ENCODE measurements at regions of chr4 and their contacts with region 1.

Region 1: GRCh38 chr4:140359562-140360427 is 13.7 kb upstream of the SCOC start:
- DNase-seq: peak; percentile 47 to 88
- H3K4me3 ChIP-seq: no peak overlapping the region
- H3K27ac ChIP-seq: no peak overlapping the region
- H3K4me1 ChIP-seq: no peaks in the 10 kb centered on the region
- H3K27me3 ChIP-seq: peaks cover 0 to 2% (median 0%) of the 10 kb centered on the region in 4 experiments; a peak in 1 of 7 replicates
- CTCF ChIP-seq: peak; percentile 66 to 91 (median 83)
- EP300 ChIP-seq: no peak
- POLR2A ChIP-seq: no peak
- RAD21 ChIP-seq: peak; percentile 63 to 68

Region 2: DNA sequence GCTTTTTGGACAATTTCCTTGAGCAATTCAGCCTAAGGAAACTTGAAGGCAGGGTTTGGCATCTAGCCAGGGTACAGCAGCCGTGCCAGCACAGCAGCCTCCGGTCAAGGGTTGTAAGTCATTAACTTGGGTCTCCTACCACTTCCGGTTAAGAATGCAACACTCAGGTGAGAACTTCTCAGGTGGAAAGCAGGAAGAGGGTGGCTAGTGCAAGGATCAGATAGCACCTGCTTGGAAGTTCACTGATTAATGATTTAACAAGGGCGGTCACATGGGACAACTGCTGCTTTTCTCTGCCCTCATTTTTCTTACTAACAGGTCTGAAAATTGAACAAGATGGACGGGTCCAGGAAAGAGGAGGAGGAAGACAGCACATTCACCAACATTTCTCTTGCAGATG is 16.5 kb before region 1 on chr4:
- CTCF ChIA-PET with region 1: interaction called, 44 read pairs
- POLR2A ChIA-PET with region 1: no interaction called
- DNase-seq: no peak
- H3K4me3 ChIP-seq: no peak overlapping the region
- H3K27ac ChIP-seq: no peak overlapping the region
- H3K4me1 ChIP-seq: peaks cover 0 to 12% (median 6%) of the 10 kb centered on the region in 4 experiments; a peak in 5 of 7 replicates
- H3K27me3 ChIP-seq: peaks cover 0 to 1% (median 0%) of the 10 kb centered on the region in 4 experiments; a peak in 2 of 7 replicates
- CTCF ChIP-seq: no peak
- EP300 ChIP-seq: no peak
- POLR2A ChIP-seq: no peak
- RAD21 ChIP-seq: no peak

Region 3: GRCh38 chr4:140382732-140383131 is 22.9 kb after region 1 on chr4:
- CTCF ChIA-PET with region 1: interaction called, 17 read pairs
- POLR2A ChIA-PET with region 1: no interaction called
- DNase-seq: no peak
- H3K4me3 ChIP-seq: no peak overlapping the region
- H3K27ac ChIP-seq: no peak overlapping the region
- H3K4me1 ChIP-seq: no peaks in the 10 kb centered on the region
- H3K27me3 ChIP-seq: no peaks in the 10 kb centered on the region
- CTCF ChIP-seq: no peak
- EP300 ChIP-seq: no peak
- POLR2A ChIP-seq: no peak
- RAD21 ChIP-seq: no peak

Region 4: GRCh38 chr4:140568507-140569306 is 208.9 kb after region 1 on chr4 and contains the start of gene UCP1:
- CTCF ChIA-PET with region 1: interaction called, 11 read pairs
- POLR2A ChIA-PET with region 1: no interaction called
- DNase-seq: peak in 1 of 2 experiments; percentile 74
- H3K4me3 ChIP-seq: peak within 1 kb of the TSS; percentile 45 to 64 (median 56)
- H3K27ac ChIP-seq: no peak within 1 kb of the TSS
- H3K4me1 ChIP-seq: peaks cover 0 to 8% (median 3%) of the 10 kb centered on the region in 4 experiments; a peak in 3 of 7 replicates
- H3K27me3 ChIP-seq: peaks cover 29 to 50% (median 41%) of the 10 kb centered on the region in 4 experiments
- CTCF ChIP-seq: peak in 1 of 3 experiments; percentile 20; a peak in 1 of 4 replicates
- EP300 ChIP-seq: no peak
- POLR2A ChIP-seq: peak in 1 of 2 experiments; percentile 68; a peak in 2 of 3 replicates
- RAD21 ChIP-seq: no peak
- total RNA-seq, gene UCP1: 0.20 and 0.29 TPM in 2 replicates

Region 5: DNA sequence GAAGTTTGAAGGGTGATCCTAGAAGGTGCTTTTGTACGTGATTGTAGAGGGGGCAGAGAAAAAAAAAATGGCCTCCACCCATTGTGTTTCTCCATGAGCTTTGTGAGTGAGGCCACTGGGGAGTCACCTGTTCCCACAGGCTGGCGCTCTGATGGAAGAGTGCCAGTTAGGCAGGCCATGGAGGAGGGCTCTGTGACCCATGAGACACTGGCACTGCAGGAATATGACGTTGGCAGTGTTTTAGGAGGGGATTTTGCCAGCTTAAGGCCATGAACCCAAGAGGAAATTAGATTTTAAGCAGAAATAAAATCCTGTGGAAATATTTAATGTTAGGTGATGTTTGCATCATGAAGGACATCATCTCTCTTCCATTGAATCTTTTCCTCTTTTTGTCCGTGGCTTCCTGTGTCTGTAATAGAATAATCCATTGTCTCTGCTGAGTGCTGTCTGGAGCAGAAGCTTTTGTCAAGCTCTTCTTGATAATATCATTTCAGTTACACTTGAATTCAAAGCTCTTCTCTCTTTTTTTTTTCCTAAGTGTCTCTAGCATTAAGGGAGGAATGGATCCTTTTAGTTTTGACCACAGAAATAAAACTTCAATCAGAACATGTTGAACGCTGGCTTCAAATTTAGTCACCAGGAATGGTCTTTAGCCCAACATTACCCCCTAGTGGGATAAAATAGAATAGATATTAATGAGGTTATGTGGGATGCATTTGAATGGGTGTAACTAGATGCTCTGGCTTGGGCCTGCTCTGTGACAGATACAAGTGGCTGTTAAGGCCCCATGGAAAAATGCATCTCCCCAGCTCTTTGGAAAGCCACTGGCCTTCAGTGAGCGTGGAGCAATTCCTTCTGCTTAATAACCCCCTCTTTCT is 250.0 kb after region 1 on chr4:
- CTCF ChIA-PET with region 1: interaction called, 10 read pairs
- POLR2A ChIA-PET with region 1: no interaction called
- DNase-seq: no peak
- H3K4me3 ChIP-seq: no peak overlapping the region
- H3K27ac ChIP-seq: no peak overlapping the region
- H3K4me1 ChIP-seq: no peaks in the 10 kb centered on the region
- H3K27me3 ChIP-seq: no peaks in the 10 kb centered on the region
- CTCF ChIP-seq: peak in 1 of 3 experiments; percentile 18; a peak in 1 of 4 replicates
- EP300 ChIP-seq: no peak
- POLR2A ChIP-seq: no peak
- RAD21 ChIP-seq: peak; percentile 47 to 48

Region 6: DNA sequence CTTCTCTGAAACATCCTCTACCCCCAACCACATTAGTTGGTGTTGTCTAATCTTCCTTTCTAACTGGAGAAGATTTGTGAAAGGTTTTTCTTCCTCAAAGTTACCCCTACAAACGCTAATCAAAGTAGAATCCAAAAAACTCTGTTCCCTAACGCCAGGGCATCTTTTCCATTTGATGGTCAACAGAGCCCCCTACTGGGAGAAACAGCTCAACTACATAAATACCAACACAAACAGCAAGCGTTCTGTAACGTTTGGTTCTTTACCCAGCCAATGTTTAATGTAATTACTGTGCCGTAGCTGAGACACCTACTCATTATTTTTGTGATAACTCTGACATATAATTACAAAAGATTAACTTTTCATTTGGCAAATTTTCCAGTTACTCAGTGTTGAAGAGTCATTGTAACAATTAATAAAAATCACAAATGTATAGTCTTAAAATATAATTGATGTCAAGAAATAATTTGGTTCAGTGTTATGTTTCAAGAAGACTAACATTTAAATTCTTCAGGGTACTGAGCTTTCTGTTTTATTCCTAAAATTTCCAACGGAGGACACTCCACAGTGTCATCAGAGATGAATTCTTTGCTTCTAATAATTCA is 491.3 kb after region 1 on chr4:
- CTCF ChIA-PET with region 1: interaction called, 15 read pairs
- POLR2A ChIA-PET with region 1: no interaction called
- DNase-seq: peak in 1 of 2 experiments; percentile 56
- H3K4me3 ChIP-seq: no peak overlapping the region
- H3K27ac ChIP-seq: no peak overlapping the region
- H3K4me1 ChIP-seq: no peaks in the 10 kb centered on the region
- H3K27me3 ChIP-seq: no peaks in the 10 kb centered on the region
- CTCF ChIP-seq: peak in 2 of 3 experiments; percentile 76 to 88; a peak in 3 of 4 replicates
- EP300 ChIP-seq: no peak
- POLR2A ChIP-seq: no peak
- RAD21 ChIP-seq: peak; percentile 98